ENCODE measurements at regions of chr6 and their contacts with region 1.

Region 1: GRCh38 chr6:710601-711571 is 17.9 kb upstream of the EXOC2 start:
- DNase-seq: peak; percentile 14 to 69 (median 42)
- ATAC-seq: peak; percentile 85 to 90
- H3K4me3 Mint-ChIP-seq: peak overlapping the region; percentile 96 to 100 (median 99)
- H3K27ac Mint-ChIP-seq: peak overlapping the region; percentile 98 to 100 (median 98)
- H3K4me1 Mint-ChIP-seq: peaks cover 10 to 22% (median 17%) of the 10 kb centered on the region in 4 donors
- H3K27me3 Mint-ChIP-seq: peaks cover 3 to 14% (median 4%) of the 10 kb centered on the region in 5 donors

Region 2: GRCh38 chr6:658244-658643 is 52.6 kb before region 1 on chr6:
- POLR2A ChIA-PET with region 1: no interaction called
- DNase-seq: no peak
- ATAC-seq: no peak
- H3K4me3 Mint-ChIP-seq: peak overlapping the region in 1 of 10 donors; percentile 1
- H3K27ac Mint-ChIP-seq: peak overlapping the region in 4 of 10 donors; percentile 13 to 77 (median 37)
- H3K4me1 Mint-ChIP-seq: peaks cover 45 to 60% (median 50%) of the 10 kb centered on the region in 4 donors
- H3K27me3 Mint-ChIP-seq: no peaks in the 10 kb centered on the region

Region 3: DNA sequence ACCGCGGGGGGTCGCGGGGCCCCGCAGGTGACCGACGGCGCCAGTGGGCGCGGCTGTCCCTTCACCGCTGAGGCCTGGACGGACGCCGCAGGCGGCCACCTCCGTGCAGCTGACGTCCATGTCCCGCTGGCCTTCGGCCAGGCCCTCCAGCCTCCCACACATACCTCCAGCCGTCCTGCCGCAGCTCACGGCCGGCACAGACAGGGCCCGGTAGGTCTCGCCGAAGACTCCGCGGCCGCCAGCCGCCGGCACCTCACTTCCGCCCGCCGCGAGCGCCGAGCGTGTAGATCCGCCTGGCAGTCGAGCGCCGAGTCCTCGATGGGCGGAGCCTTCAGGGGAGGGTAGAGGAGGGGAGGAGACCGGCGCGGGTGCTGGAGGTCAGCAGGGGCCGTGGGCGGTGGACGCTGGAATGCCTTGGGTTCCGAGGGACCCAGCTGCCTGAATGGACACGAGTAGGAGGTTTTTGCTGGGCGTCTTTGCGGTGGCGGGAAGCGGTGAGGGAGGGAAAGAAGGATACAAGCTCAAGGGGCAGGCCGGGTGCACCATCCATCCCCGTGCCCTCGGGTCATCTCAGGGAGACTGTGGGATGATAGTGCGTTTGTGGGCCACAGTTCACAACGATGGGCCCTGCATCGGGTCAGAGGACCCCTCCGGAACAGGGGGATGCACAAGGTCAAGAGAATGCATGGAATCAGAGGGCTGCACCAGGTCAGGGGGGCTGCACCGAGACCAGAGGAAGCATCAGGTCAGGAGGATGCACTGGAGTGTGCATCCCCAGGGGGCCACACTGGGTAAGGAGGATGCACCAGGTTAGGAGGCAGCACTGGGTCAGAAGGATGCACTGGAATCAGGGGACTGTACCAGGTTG is 17.8 kb before region 1 on chr6 and contains the start of gene EXOC2:
- POLR2A ChIA-PET with region 1: interaction called, 19 read pairs
- DNase-seq: peak; percentile 67 to 90 (median 80)
- ATAC-seq: peak; percentile 76 to 86
- H3K4me3 Mint-ChIP-seq: peak within 1 kb of the TSS; percentile 90 to 98 (median 95)
- H3K27ac Mint-ChIP-seq: peak within 1 kb of the TSS; percentile 40 to 97 (median 94)
- H3K4me1 Mint-ChIP-seq: peaks cover 16 to 46% (median 36%) of the 10 kb centered on the region in 4 donors
- H3K27me3 Mint-ChIP-seq: no peaks in the 10 kb centered on the region
- polyA plus RNA-seq, gene EXOC2: 28.6 to 38.6 (median 36.7) TPM